ENCODE measurements at regions of chr4 and their contacts with region 1.

Region 1: DNA sequence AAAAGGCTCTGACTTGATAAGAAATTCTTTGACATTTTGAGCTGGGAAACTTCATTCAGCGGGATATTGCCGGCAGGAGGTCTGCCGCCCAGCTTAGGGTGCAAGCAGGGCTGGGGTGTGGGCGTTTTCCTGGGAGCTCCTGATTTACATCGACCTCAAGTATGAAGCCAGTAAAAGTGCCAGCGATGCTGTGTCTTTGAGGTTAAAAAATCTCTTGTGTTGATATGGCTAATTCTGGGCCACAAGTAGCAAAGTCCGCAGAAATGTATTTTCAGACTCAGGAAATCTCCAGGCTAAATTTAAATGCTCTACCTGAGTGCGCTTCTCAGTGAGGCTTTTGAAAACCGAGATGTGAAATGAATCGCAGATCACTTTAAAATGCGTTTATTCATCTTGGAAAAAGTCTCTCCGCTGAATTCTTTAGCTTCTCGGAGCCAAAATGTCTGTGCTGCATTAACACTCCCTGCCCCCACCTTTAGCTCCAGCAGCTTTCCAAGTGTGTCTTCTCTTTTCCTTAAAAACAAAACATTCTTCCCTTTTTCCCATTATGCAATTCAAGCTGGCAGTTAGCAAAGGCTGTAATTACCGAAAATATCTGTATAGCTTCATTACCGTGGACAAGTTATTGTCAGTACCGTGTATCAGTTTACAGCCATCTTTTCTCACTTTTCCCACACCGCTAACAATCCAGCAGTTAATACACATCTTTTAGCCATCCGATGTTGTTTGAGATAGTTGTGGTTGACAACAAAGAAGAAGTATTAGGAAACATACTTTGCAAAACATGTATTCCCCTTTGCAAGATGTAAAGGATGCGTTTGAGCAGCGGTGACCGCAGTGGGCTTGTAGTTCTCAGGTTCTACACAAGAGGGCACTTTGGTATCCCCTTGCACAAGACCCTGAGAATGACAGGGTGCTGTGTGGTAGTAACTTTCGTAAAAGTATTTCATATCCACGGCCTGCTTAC is 136.0 kb upstream of the STX18 start:
- DNase-seq: peak; percentile 70
- H3K4me3 ChIP-seq: peak overlapping the region; percentile 17
- H3K27ac ChIP-seq: no peak overlapping the region
- H3K4me1 ChIP-seq: peaks cover 6% of the 10 kb centered on the region
- H3K27me3 ChIP-seq: no peaks in the 10 kb centered on the region
- CTCF ChIP-seq: peak; percentile 84

Region 2: DNA sequence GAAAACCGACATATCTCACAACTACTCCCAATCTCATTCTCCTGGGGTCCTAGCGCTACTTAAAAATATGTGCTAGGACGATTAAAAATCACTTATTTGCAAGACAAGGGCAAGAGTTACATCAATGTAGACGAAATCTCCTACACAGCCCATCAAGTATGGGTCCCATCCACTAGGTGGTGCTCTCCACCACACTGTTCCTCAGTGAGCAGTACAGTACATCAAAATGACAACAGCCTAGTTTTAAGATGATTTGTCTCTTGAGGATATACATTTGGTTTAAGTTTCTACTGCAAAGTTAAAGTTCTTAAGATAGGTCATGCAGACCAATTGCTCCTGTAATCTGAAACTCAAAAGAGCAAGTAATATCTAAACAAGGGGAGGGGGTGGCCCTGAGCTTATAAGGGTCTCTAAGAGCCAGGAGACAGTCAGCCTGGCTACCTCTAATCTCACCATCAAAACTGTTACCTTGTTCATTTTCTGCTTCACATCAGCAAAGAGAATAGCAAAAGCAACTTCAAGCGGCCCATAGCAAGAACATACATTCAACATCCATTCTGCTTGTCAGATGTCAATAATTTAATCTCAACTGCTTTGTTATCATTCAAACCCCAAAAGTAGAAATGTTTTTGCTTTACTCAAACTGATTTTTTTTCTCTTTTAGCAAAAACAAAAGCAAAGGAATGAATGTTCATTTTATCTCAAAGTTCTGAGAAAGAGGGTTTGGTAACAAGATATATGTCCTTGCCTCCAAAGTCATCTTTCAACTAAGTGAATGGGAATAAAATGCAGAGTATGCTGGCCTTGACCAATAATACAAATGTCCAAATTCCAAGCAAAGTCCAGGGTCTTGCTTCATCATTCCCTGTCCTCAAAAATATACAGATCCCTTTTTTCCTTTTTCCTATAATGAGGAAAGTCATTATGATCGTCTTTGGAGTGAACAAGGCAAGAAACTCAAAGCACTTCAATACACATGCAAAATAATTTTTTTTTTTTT is 189.1 kb before region 1 on chr4:
- CTCF ChIA-PET with region 1: no interaction called
- POLR2A ChIA-PET with region 1: no interaction called
- intact Hi-C with region 1: loop called (anchors 10 kb)
- DNase-seq: peak; percentile 85
- H3K4me3 ChIP-seq: no peak overlapping the region
- H3K27ac ChIP-seq: no peak overlapping the region
- H3K4me1 ChIP-seq: peaks cover 22% of the 10 kb centered on the region
- H3K27me3 ChIP-seq: no peaks in the 10 kb centered on the region
- CTCF ChIP-seq: peak; percentile 91

Region 3: DNA sequence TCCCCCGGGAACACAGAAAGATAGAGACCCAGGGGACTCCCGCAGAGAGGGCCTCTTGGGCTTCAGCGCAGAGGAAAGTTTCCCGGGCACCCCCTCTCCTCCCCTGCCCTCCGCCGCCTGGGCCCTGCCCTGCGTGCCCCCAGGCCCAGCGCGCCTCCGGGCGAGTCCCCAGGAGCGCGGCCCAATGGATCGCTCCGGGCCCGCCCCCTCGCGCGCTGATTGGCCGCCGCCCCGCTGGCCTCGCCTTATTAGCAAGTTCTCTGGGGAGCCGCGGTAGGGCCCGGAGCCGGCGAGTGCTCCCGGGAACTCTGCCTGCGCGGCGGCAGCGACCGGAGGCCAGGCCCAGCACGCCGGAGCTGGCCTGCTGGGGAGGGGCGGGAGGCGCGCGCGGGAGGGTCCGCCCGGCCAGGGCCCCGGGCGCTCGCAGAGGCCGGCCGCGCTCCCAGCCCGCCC is 181.6 kb after region 1 on chr4 and contains the start of gene MSX1:
- CTCF ChIA-PET with region 1: interaction called, 14 read pairs
- POLR2A ChIA-PET with region 1: no interaction called
- intact Hi-C with region 1: loop called (anchors 5 kb)
- DNase-seq: peak; percentile 90
- H3K4me3 ChIP-seq: peak within 1 kb of the TSS; percentile 65
- H3K27ac ChIP-seq: peak within 1 kb of the TSS; percentile 40
- H3K4me1 ChIP-seq: peaks cover 6% of the 10 kb centered on the region
- H3K27me3 ChIP-seq: peaks cover 30% of the 10 kb centered on the region
- CTCF ChIP-seq: no peak
- total RNA-seq, gene MSX1: 4.7 and 6.1 TPM in 2 replicates

Region 4: DNA sequence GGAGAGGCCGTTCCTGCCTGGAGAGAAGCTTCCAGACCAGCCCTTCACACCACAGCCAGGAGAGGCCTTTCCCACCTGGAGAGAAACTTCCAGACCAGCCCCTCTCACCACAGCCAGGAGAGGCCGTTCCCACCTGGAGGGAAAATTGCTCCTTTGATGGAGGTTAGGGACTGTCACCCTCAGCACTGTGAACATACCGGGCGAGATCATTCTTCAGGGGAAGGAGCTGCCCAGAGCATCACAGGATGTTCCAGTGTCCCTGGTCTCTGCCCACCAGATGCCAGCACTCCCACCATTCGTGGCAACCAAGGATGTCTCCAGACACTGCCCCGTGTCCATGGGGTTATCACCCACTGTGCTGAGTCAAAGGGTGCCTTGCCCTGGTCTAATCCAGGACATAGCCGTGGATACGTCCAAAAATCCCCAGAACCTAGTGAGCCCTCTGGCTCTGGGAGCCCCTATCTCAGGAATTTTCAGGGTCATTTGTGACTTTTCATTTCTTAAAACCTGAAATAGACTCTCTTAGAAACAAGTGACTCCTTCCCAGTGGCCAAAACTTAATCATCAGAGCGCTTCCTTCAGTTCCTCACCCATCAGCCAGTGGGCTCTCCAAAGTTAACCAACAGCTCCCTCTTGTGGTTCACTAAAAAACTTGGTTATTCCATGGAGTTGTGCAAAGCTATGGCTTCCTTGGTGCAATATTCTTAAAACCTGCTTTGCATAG is 1134.8 kb after region 1 on chr4:
- CTCF ChIA-PET with region 1: interaction called, 14 read pairs
- POLR2A ChIA-PET with region 1: no interaction called
- intact Hi-C with region 1: no loop called
- DNase-seq: peak; percentile 85
- H3K4me3 ChIP-seq: no peak overlapping the region
- H3K27ac ChIP-seq: no peak overlapping the region
- H3K4me1 ChIP-seq: peaks cover 12% of the 10 kb centered on the region
- H3K27me3 ChIP-seq: no peaks in the 10 kb centered on the region
- CTCF ChIP-seq: peak; percentile 72

Measured in A673 (cell line).